Mammary epithelial cell (primary cell): ENCODE measurements at regions of chr12 and their contacts with region 1.

Region 1: GRCh38 chr12:69157023-69157655 is 82.2 kb upstream of the CPSF6 start:
- DNase-seq: peak; percentile 67
- H3K4me3 ChIP-seq: no peak overlapping the region
- H3K27ac ChIP-seq: no peak overlapping the region
- H3K4me1 ChIP-seq: no peaks in the 10 kb centered on the region
- H3K27me3 ChIP-seq: no peaks in the 10 kb centered on the region
- CTCF ChIP-seq: peak; percentile 97 to 99

Region 2: GRCh38 chr12:68113644-68114043 is 1043.5 kb before region 1 on chr12:
- CTCF ChIA-PET with region 1: interaction called, 31 read pairs
- dilution Hi-C with region 1: no loop called
- in situ Hi-C with region 1: no loop called
- intact Hi-C with region 1: no loop called
- DNase-seq: no peak
- H3K4me3 ChIP-seq: no peak overlapping the region
- H3K27ac ChIP-seq: no peak overlapping the region
- H3K4me1 ChIP-seq: no peaks in the 10 kb centered on the region
- H3K27me3 ChIP-seq: no peaks in the 10 kb centered on the region
- CTCF ChIP-seq: peak; percentile 44 to 55

Region 3: DNA sequence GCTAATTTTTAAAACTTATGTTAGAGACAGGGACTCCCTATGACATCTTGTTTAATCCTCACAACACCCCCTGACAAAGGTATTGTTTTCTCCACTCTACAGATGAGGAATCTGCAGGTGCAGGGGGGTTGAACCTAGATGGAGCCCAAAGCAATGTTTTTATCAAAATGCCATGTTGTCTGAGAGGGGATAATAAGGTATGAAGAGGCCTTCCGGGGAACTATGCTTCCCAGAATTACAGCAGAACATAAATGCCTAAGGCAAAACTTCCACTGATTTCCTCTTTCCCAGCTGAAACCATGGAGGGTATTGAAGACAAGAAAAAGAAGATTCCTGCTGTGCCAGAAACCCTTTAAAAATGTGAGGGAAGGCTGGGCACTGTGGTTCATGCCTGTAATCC is 472.8 kb before region 1 on chr12:
- CTCF ChIA-PET with region 1: no interaction called
- dilution Hi-C with region 1: no loop called
- in situ Hi-C with region 1: no loop called
- intact Hi-C with region 1: no loop called
- DNase-seq: no peak
- H3K4me3 ChIP-seq: no peak overlapping the region
- H3K27ac ChIP-seq: no peak overlapping the region
- H3K4me1 ChIP-seq: peaks cover 17% of the 10 kb centered on the region
- H3K27me3 ChIP-seq: no peaks in the 10 kb centered on the region
- CTCF ChIP-seq: no peak

Region 4: DNA sequence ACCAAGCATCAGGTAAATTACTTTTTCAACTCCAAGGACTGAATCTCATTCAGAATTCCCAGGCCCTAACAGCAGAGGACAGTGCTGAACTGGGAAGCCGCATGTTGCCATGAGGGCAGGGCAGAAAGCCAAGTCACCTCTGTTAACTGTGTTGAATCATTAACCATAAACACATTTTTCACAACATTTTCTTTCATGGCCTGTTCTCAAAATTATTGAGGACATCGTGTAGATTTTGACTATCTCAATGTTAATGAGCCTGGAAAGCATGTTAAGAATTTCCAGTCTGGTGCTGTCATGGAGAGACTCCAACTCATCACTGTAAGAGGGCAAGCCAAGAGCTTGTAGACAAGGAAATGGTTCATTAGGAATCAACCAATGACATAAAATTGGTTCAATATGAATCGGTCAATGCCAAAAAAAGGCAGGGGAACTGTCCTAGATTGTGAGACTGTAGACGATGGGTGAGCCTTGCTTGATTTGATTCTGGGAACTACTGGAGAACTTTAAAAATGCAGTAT is 257.8 kb before region 1 on chr12:
- CTCF ChIA-PET with region 1: no interaction called
- dilution Hi-C with region 1: no loop called
- in situ Hi-C with region 1: no loop called
- intact Hi-C with region 1: loop called (anchors 1 kb)
- DNase-seq: peak; percentile 67
- H3K4me3 ChIP-seq: no peak overlapping the region
- H3K27ac ChIP-seq: no peak overlapping the region
- H3K4me1 ChIP-seq: no peaks in the 10 kb centered on the region
- H3K27me3 ChIP-seq: no peaks in the 10 kb centered on the region
- CTCF ChIP-seq: peak; percentile 63 to 96

Region 5: GRCh38 chr12:69168828-69169227 is 11.7 kb after region 1 on chr12:
- CTCF ChIA-PET with region 1: no interaction called
- dilution Hi-C with region 1: no loop called
- in situ Hi-C with region 1: no loop called
- intact Hi-C with region 1: no loop called
- DNase-seq: no peak
- H3K4me3 ChIP-seq: no peak overlapping the region
- H3K27ac ChIP-seq: no peak overlapping the region
- H3K4me1 ChIP-seq: no peaks in the 10 kb centered on the region
- H3K27me3 ChIP-seq: no peaks in the 10 kb centered on the region
- CTCF ChIP-seq: no peak

Region 6: DNA sequence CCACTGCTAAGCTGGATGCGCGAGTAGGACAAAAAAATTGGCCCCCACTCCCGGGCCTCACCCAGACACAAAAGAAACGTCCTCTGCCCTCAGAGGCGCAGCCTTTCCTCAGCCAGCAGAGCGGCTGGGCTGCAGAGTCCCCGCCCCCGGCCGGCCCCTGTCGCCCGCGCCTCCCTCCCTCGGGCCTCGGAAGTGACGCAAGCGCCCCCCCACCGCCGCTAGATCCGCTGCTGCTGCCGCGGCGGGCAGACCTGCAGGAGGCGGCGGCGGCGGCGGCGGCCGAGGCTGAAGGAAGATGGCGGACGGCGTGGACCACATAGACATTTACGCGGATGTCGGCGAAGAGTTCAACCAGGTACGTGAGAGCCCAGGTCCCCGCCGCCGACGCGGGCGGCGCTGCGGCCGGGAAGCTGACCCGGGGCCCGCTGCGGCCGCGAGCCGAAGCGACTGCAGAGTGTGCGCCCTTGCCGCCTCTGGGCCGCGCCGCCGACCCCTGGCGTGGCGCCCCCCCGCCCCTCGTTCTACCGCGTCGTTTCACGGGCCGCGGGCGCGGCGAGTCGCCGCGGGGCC is 82.3 kb after region 1 on chr12 and contains the start of gene CPSF6:
- CTCF ChIA-PET with region 1: no interaction called
- dilution Hi-C with region 1: no loop called
- in situ Hi-C with region 1: no loop called
- intact Hi-C with region 1: no loop called
- DNase-seq: peak; percentile 91
- H3K4me3 ChIP-seq: peak within 1 kb of the TSS; percentile 71 to 100 (median 86)
- H3K27ac ChIP-seq: peak within 1 kb of the TSS; percentile 88
- H3K4me1 ChIP-seq: peaks cover 12% of the 10 kb centered on the region
- H3K27me3 ChIP-seq: no peaks in the 10 kb centered on the region
- CTCF ChIP-seq: no peak
- total RNA-seq, gene CPSF6: 21.7 to 56.7 TPM

Region 7: GRCh38 chr12:69354556-69355187 is 197.5 kb after region 1 on chr12:
- CTCF ChIA-PET with region 1: no interaction called
- dilution Hi-C with region 1: no loop called
- in situ Hi-C with region 1: no loop called
- intact Hi-C with region 1: loop called (anchors 1 kb)
- DNase-seq: no peak
- H3K4me3 ChIP-seq: no peak overlapping the region
- H3K27ac ChIP-seq: no peak overlapping the region
- H3K4me1 ChIP-seq: peaks cover 8% of the 10 kb centered on the region
- H3K27me3 ChIP-seq: no peaks in the 10 kb centered on the region
- CTCF ChIP-seq: no peak

Region 8: GRCh38 chr12:69639400-69640016 is 482.4 kb after region 1 on chr12:
- CTCF ChIA-PET with region 1: no interaction called
- dilution Hi-C with region 1: no loop called
- in situ Hi-C with region 1: no loop called
- intact Hi-C with region 1: loop called (anchors 10 kb)
- DNase-seq: peak; percentile 43
- H3K4me3 ChIP-seq: no peak overlapping the region
- H3K27ac ChIP-seq: no peak overlapping the region
- H3K4me1 ChIP-seq: no peaks in the 10 kb centered on the region
- H3K27me3 ChIP-seq: no peaks in the 10 kb centered on the region
- CTCF ChIP-seq: peak; percentile 85 to 90